Activated CD4-positive, alpha-beta memory T cell treated with anti-CD3 and anti-CD28 coated beads for 36 hours (primary cell): ENCODE measurements at regions of chr15 and their contacts with region 1.

Region 1: DNA sequence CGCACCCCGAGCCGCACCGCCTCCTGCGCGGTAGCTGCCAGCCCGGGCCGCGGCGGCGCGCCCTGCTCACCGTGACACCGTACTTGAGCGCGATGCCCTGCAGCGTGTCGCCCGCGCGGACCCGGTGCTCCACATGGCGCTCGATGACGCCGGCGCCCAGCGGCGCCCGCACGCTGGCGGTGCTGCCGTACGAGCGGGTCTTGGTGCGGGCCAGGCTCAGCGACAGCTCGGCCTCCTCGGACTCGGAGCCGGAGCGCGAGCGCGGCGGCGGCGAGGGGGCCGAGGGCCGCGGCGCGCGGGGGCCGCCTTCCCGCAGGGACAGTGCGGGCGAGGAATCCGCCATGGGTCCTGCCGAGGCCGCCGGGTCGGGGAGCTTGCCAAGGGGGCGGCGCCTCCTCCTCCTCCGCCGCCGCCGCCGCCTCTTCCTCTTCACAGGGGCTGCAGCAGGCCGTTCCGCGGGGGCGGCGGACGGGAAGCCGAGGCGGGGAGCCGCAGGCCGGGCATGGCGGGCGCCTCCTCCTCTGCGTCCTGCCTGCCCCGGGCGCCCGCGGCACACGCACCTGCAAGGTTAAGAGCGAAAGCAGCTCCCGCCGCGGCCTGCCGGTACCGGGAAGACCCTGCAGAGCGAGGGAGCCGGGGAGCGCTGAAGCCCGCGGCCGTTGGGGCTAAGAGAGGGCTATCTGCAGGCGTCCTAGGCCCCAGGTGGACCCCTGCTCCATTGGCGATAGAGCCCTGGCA is at the start of gene LYSMD2:
- DNase-seq: peak; percentile 79
- H3K4me3 Mint-ChIP-seq: peak within 1 kb of the TSS; percentile 81
- H3K27ac Mint-ChIP-seq: peak within 1 kb of the TSS; percentile 85
- H3K4me1 Mint-ChIP-seq: peaks cover 55% of the 10 kb centered on the region
- H3K27me3 Mint-ChIP-seq: no peaks in the 10 kb centered on the region
- total RNA-seq, gene LYSMD2: 18.1 to 18.6 TPM

Region 2: GRCh38 chr15:51243759-51244158 is 493.7 kb before region 1 on chr15:
- CTCF ChIA-PET with region 1: no interaction called
- POLR2A ChIA-PET with region 1: no interaction called
- intact Hi-C with region 1: loop called (anchors 5 kb)
- DNase-seq: no peak
- H3K4me3 Mint-ChIP-seq: no peak overlapping the region
- H3K27ac Mint-ChIP-seq: no peak overlapping the region
- H3K4me1 Mint-ChIP-seq: peaks cover 7% of the 10 kb centered on the region
- H3K27me3 Mint-ChIP-seq: peaks cover 12% of the 10 kb centered on the region

Region 3: GRCh38 chr15:51649659-51650521 is 87.6 kb before region 1 on chr15:
- CTCF ChIA-PET with region 1: interaction called, 21 read pairs
- POLR2A ChIA-PET with region 1: no interaction called
- intact Hi-C with region 1: loop called (anchors 1 kb)
- DNase-seq: peak; percentile 10
- H3K4me3 Mint-ChIP-seq: no peak overlapping the region
- H3K27ac Mint-ChIP-seq: no peak overlapping the region
- H3K4me1 Mint-ChIP-seq: no peaks in the 10 kb centered on the region
- H3K27me3 Mint-ChIP-seq: no peaks in the 10 kb centered on the region

Region 4: DNA sequence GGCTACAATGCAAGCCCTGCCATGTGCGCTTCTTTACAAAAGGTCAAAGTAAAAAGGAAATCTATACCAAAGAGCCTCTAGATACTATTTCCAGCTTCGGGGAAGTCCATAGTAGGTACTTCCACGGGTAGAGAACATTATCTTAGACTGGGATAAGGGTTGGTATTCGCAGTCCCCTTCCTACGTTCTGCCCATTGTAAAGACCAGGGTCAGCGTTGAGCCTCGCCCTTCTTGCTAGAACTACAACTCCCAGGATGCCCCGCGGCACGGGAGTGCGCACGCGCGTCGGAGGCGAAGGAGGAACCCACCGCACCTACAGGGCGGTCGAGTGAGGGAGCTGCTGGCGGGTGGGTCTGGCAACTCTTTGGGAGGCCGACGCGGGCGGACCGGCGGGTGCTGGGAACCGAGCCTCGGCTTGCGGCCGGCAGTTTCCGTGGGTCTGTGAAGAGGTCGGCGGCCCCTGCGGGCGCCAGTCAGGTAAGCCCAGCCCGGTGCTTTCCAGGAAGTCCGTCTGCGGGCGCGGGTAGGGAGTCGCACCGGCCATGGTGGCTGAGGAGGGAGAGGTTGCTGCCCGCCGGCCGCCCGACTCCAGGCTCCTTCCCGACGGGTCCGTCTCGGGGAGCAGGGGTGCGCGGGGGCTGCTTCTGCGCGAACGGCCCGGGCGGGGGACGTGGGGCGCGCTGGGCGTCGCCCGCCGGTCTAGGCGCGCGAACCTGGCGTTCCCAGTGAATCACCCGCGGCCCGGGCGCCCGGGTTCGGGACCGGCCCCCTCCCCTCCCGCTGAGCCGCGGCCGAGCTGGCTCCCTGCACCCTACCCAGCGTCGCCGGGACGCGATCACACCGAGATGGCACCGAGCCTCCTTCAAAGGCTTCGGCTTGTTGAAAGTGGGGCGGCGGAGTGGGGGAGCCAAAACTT is 92.2 kb after region 1 on chr15 and contains the start of gene TMOD3:
- CTCF ChIA-PET with region 1: no interaction called
- POLR2A ChIA-PET with region 1: interaction called, 5 read pairs
- intact Hi-C with region 1: loop called (anchors 2 kb)
- DNase-seq: peak; percentile 93
- H3K4me3 Mint-ChIP-seq: peak within 1 kb of the TSS; percentile 90
- H3K27ac Mint-ChIP-seq: peak within 1 kb of the TSS; percentile 90
- H3K4me1 Mint-ChIP-seq: peaks cover 44% of the 10 kb centered on the region
- H3K27me3 Mint-ChIP-seq: no peaks in the 10 kb centered on the region
- total RNA-seq, gene TMOD3: 56.9 to 61.6 TPM

Region 5: DNA sequence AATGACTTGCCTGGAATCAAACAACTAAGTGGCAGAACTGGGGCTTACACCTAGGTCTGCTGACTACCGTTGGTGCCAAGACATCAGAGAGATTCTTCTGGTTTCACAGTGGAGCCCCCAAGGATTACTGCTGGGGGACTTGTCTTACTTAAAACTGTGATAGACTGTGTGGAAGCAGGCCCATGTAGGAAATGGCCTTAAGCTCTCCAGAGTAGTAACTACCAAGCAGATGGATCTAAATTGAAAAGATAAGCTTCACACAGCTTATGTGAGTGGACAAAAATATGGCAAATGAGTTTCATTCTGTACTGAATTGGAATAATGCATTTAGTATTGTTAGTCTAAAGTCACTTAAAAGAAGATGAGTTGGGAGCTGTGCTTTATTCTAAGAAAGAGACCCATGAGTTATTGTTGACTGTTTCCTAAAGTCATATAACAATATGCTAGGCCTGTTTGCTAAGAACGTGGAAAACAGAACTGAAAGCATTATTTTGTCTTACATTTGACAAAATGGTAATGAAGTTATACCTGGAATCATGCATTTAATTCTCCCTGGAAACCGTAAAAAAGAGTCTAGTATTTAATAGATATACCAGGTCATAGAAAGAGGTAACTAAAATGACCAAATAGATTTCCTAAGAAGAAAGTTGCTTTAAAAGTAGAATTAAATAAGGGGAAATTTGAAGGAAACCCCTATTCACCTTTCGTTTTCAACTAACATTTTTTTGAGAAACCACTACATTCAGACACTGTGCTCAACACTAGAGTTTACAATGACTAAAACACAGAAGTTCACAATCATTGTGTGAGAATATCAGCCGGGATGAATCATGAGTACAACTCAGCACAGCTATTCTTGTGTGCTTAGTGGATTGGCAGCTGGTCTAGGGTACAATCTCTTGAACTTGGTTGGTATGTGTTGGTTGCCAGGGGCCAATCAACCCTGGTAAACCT is 268.6 kb after region 1 on chr15:
- CTCF ChIA-PET with region 1: no interaction called
- POLR2A ChIA-PET with region 1: interaction called, 5 read pairs
- intact Hi-C with region 1: loop called (anchors 5 kb)
- DNase-seq: peak; percentile 60
- H3K4me3 Mint-ChIP-seq: no peak overlapping the region
- H3K27ac Mint-ChIP-seq: peak overlapping the region; percentile 69
- H3K4me1 Mint-ChIP-seq: peaks cover 63% of the 10 kb centered on the region
- H3K27me3 Mint-ChIP-seq: no peaks in the 10 kb centered on the region